Mammary epithelial cell (primary cell): ENCODE measurements at regions of chr16 and their contacts with region 1.

Region 1: GRCh38 chr16:84976644-84977400 is 34.5 kb downstream of the ZDHHC7 start:
- DNase-seq: no peak
- H3K4me3 ChIP-seq: no peak overlapping the region
- H3K27ac ChIP-seq: no peak overlapping the region
- H3K4me1 ChIP-seq: no peaks in the 10 kb centered on the region
- H3K27me3 ChIP-seq: no peaks in the 10 kb centered on the region
- CTCF ChIP-seq: no peak

Region 2: DNA sequence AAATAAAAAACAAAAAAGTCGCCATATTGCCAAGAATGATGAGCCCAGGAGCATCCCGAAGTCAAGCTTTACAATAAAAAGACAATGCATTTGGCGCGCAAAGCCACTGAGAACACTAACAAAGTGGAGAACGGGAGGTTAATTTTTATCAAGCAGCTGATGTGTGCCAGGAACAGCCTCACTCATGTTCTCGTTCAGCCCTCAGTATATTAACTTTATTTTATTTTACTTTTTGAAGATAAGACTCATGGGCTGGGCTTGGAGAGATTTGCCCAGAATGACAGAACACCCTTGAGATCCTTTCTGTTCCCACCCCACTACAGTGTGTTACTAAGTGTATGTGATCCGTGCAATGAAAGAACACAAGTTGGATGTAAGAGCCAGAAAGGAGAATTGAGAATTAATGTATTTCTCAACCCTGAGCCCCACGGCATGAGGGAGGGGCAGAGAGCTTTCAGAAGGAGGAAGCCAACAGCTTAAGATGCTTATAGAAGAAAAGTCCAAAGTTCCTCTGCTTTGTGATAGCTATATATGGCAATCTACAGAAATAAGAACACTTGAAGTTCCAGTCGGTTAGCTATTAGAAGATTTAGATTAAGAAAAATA is 407.3 kb before region 1 on chr16:
- CTCF ChIA-PET with region 1: no interaction called
- dilution Hi-C with region 1: loop called (anchors 5 kb)
- in situ Hi-C with region 1: no loop called
- intact Hi-C with region 1: no loop called
- DNase-seq: no peak
- H3K4me3 ChIP-seq: no peak overlapping the region
- H3K27ac ChIP-seq: no peak overlapping the region
- H3K4me1 ChIP-seq: no peaks in the 10 kb centered on the region
- H3K27me3 ChIP-seq: no peaks in the 10 kb centered on the region
- CTCF ChIP-seq: no peak

Region 3: DNA sequence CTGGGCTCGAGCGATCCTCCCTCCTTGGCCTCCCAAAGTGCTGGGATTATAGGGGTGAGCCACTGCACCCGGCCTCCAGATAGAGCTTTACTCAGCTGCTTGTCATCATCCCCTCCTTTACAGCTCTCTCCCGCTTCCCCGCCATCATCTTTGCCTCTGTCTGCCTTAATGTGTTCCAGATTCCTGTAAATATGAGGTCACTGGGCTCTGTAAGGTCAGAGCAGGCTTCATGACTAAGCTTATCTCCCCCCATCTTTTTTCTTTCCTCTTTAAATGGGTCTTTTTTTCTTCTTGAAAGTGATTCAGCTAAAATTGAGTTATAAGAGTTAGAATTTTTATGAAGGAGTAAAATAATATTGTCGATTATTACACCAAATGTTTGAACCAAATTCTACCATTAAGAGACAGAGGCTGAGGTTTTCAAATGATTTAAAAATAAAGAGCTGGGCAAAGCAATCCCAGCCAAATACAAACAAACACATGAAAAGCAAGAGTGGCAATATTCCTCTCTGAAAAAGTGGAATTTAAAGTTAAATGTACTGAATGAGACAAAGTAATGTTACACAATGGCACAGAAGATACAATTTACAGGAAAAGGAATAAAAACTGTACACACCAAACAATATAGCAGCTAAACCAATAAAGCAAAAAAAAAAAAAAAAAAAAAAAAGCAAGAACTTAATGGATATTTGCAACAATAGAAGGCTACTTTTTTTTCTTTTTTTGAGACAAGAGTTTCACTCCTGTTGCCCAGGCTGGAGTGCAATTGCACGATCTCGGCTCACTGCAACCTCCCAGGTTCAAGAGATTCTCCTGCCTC is 94.9 kb before region 1 on chr16:
- CTCF ChIA-PET with region 1: no interaction called
- dilution Hi-C with region 1: loop called (anchors 5 kb)
- in situ Hi-C with region 1: no loop called
- intact Hi-C with region 1: no loop called
- DNase-seq: peak; percentile 53
- H3K4me3 ChIP-seq: no peak overlapping the region
- H3K27ac ChIP-seq: no peak overlapping the region
- H3K4me1 ChIP-seq: peaks cover 36% of the 10 kb centered on the region
- H3K27me3 ChIP-seq: no peaks in the 10 kb centered on the region
- CTCF ChIP-seq: no peak

Region 4: GRCh38 chr16:84907575-84907974 is 69.2 kb before region 1 on chr16:
- CTCF ChIA-PET with region 1: no interaction called
- dilution Hi-C with region 1: no loop called
- in situ Hi-C with region 1: no loop called
- intact Hi-C with region 1: no loop called
- DNase-seq: no peak
- H3K4me3 ChIP-seq: no peak overlapping the region
- H3K27ac ChIP-seq: no peak overlapping the region
- H3K4me1 ChIP-seq: no peaks in the 10 kb centered on the region
- H3K27me3 ChIP-seq: no peaks in the 10 kb centered on the region
- CTCF ChIP-seq: no peak

Region 5: DNA sequence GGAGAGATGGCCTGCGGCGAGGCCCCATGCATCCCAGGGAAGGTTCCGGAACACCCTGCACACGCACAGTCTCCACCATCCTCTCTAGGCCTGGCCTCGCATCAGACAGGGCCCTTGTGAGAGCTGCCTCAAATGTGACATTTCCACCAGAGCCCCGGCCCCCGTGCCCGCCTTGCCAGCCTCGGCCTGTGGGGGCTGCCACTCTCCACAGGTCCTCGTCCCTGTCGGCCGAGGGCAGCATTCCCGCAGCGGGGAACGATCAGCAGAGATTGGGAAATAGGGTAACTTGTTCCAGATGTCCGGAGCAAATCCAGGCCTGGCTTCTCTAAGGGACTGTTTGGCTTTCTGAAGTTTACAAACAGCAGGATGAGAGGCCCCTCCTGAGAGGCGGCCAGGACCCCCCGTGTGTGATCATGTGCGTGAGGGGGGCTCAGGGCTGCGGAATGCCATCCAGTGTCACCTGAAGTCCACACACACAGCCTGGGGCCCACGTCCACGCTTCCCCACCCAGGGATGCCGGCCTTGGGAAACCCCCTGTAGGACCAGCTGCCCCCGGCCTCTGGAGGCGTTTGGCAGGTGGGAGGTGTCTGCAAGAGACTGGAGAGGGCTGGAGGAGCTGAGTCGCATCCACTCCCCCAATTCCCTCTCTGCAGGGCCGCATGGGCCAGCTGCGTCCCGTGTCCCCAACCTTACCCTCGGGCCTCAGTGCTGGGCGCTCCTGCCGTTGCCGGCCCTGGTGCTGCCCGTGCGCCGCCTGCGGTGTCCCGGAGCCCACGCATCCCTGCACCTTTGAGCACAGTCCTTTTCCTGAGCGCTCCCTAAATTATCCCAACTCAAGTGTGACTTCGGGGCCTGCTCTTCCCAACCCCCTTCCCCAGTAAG is 35.9 kb before region 1 on chr16:
- CTCF ChIA-PET with region 1: no interaction called
- dilution Hi-C with region 1: loop called (anchors 5 kb)
- in situ Hi-C with region 1: no loop called
- intact Hi-C with region 1: no loop called
- DNase-seq: no peak
- H3K4me3 ChIP-seq: no peak overlapping the region
- H3K27ac ChIP-seq: no peak overlapping the region
- H3K4me1 ChIP-seq: no peaks in the 10 kb centered on the region
- H3K27me3 ChIP-seq: no peaks in the 10 kb centered on the region
- CTCF ChIP-seq: no peak

Region 6: GRCh38 chr16:85025781-85026641 is 49.2 kb after region 1 on chr16:
- CTCF ChIA-PET with region 1: no interaction called
- dilution Hi-C with region 1: no loop called
- in situ Hi-C with region 1: no loop called
- intact Hi-C with region 1: no loop called
- DNase-seq: no peak
- H3K4me3 ChIP-seq: no peak overlapping the region
- H3K27ac ChIP-seq: no peak overlapping the region
- H3K4me1 ChIP-seq: peaks cover 29% of the 10 kb centered on the region
- H3K27me3 ChIP-seq: no peaks in the 10 kb centered on the region
- CTCF ChIP-seq: no peak

Region 7: DNA sequence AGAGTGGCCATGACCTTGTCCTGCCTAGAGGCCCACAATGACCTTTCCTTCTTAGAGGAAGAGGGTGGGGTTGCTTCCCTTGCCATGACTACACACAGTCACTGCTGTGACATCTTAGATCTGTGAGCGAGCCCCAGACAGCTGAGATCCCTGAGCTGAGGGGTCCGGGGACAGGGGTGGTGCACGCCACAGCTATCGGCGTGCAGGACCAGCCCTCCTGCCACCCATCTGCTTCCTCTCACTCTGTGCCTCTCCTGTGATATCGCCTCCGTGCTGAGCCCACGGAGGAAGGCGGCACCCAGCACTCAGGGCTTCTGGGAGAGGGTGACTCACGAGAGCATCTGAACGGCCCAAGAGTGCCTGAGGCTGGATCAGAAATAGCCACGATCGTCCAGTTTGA is 86.0 kb after region 1 on chr16:
- CTCF ChIA-PET with region 1: no interaction called
- dilution Hi-C with region 1: no loop called
- in situ Hi-C with region 1: no loop called
- intact Hi-C with region 1: no loop called
- DNase-seq: no peak
- H3K4me3 ChIP-seq: no peak overlapping the region
- H3K27ac ChIP-seq: no peak overlapping the region
- H3K4me1 ChIP-seq: no peaks in the 10 kb centered on the region
- H3K27me3 ChIP-seq: no peaks in the 10 kb centered on the region
- CTCF ChIP-seq: no peak

Region 8: DNA sequence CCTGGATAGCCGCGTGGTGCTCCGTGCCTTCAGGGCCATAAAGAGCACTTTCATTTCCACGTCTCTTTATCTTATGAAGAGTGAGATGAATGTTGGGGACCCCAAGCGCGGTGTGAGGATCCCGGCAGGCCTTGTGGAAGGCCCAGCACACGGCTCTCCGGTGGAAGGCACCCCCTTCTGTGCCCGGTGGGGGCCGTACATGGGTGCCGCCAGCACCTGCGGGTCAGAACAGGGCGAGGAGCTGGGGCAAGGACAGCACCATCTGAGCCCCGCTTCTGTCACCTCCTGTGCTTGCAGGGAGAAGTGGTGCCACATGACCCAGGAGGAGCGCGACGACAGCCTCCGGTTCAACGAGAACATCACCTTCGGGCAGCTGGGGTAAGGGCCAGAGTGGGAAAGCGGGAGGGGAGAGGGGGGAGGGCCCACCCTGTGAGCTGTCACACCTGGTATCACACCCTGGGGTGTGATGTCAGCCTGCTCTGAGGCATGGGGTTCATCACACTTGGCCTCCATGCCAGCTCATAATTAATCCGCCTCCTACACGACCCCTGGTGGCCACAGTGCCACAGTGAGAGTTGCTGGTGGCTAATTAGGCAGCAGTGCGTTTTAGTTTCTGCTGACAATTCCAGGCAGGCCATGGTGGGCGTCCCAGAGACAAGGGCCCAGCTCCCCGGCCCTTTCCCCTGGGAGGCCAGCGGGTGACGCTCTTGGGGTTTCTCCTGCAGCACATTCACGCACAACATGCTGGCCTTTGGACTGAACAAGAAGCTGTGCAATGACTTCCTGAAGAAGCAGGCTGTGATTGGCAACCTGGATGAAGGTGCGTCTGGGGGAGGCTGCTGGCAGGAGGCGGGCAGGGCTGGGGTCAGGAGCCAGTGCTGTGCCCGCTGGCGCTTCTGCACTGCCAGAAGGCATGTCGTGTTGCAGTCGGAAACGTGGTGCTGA is 109.8 kb after region 1 on chr16:
- CTCF ChIA-PET with region 1: no interaction called
- dilution Hi-C with region 1: no loop called
- in situ Hi-C with region 1: no loop called
- intact Hi-C with region 1: no loop called
- DNase-seq: peak; percentile 62
- H3K4me3 ChIP-seq: no peak overlapping the region
- H3K27ac ChIP-seq: no peak overlapping the region
- H3K4me1 ChIP-seq: peaks cover 26% of the 10 kb centered on the region
- H3K27me3 ChIP-seq: no peaks in the 10 kb centered on the region
- CTCF ChIP-seq: peak; percentile 82 to 85